ENCODE measurements at regions of chr11 and their contacts with region 1.

Region 1: DNA sequence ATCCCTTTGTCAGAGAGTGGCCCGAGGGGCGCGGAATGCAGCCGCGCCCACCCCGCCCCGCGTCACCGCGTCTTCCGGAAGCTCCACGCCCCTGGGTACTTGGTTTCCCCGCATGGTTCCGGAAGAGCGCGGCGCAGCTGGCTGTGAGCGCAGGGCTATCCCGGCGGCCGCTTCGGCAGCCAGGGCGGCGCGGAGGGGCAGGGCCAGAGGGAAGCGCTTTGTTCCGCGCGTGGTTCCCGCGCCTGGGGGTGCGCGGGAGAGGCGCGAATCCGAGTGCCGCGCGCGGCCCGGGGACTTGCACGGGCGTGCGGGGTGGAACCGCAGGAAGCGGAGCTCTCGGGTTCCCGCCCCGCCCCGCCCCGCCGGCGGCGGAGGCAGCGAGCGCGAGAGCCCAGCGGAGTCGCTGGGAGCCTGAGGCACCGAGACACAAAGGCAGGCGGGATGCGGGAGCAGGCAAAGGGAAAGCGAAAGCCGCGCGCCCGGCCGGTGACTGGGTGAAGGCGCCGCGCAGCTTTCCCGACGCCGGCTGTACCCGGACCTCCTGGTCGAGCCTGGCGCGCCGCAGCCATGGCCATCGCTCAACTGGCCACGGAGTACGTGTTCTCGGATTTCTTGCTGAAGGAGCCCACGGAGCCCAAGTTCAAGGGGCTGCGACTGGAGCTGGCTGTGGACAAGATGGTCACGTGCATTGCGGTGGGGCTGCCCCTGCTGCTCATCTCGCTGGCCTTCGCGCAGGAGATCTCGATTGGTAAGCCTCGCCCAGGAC is at the start of gene PANX1:
- DNase-seq: peak; percentile 95
- total RNA-seq, gene PANX1: 20.2 to 45.3 TPM

Region 2: DNA sequence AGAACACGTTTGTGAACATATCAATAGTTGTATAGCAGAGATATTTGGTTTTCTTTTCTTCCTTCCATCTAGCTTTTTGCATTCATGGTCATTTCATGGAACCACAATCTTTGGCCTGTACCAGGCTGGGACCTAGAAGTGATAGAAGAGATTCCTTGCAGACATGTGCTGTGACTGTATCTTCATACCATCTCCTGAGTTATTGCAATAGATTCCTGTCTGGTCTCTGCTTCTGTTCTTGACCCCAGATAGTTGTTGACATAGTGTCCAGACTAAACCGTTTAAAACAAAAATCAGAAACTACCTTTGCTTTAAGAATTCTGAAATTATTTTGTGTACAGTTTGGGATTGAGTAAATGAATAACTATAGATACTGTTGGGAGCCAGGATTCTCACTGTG is 16.5 kb after region 1 on chr11:
- intact Hi-C with region 1: loop called in 1 of 2 experiments (anchors 1 kb)
- DNase-seq: no peak